ENCODE measurements at regions of chr18 and their contacts with region 1.

Region 1: GRCh38 chr18:76492669-76493212 is 2.3 kb downstream of the ZNF516 start:
- DNase-seq: peak; percentile 98 to 99
- ATAC-seq: peak; percentile 64 to 67
- H3K4me3 ChIP-seq: peak overlapping the region; percentile 82 to 94 (median 86)
- H3K27ac ChIP-seq: peak overlapping the region; percentile 82 to 99 (median 96)
- H3K4me1 ChIP-seq: peaks cover 28 to 29% of the 10 kb centered on the region in 2 donors
- H3K27me3 ChIP-seq: no peaks in the 10 kb centered on the region
- CTCF ChIP-seq: no peak
- POLR2A ChIP-seq: peak; percentile 56 to 74

Region 2: DNA sequence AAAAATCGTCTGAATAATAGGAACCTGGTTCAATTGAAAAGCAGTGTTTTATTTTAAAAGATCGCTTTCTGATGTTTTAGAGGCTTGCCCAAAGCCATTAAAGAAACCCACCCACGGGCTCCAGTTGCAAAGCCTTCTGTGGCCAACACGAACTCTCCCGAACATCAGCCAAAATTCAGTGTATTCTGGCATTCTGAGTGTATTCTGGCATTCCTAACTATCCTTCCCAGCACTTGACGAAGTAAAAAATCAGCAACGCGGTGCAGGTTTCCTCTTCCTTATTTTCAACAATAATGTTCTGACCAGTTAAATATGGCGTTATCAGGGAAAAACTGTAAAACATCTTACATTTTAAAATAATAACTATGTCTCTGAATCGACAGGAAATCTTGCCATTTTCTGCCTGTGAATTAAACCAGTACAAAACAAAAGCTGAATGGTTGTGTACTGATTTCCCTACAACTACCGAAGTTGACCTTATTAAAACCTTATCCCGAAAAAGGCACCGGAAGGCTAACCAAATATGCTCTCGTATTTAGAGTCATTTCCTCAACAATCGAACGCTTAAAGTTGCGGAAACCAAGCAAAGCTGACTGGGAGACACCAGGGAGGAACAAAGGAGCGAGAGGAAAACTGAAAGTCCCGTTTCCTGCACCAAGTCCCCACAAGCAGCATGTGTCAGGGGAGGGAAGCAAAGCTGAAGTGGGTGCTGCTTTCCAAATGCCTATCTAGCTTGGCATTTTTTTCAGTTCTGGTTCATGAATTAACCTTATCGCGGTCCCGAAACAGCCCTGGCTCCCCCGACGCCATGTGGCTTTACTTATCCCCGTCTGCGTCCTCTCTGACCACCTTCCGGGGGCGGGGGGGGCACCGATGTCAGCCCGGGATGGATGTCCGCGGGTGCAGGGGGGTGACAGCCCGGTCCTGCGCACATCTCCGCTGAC is 42.0 kb before region 1 on chr18:
- in situ Hi-C with region 1: no loop called
- intact Hi-C with region 1: loop called (anchors 1 kb)
- DNase-seq: peak; percentile 55 to 77
- ATAC-seq: peak; percentile 51 to 64
- H3K4me3 ChIP-seq: peak overlapping the region; percentile 70 to 85 (median 76)
- H3K27ac ChIP-seq: peak overlapping the region; percentile 85 to 92 (median 92)
- H3K4me1 ChIP-seq: peaks cover 66 to 72% of the 10 kb centered on the region in 2 donors
- H3K27me3 ChIP-seq: no peaks in the 10 kb centered on the region
- CTCF ChIP-seq: no peak
- POLR2A ChIP-seq: peak; percentile 26 to 51

Region 3: GRCh38 chr18:76565238-76566180 is 72.8 kb after region 1 on chr18:
- in situ Hi-C with region 1: no loop called
- intact Hi-C with region 1: loop called (anchors 2 kb)
- DNase-seq: peak; percentile 69 to 70
- ATAC-seq: peak; percentile 95 to 96
- H3K4me3 ChIP-seq: peak overlapping the region; percentile 33 to 51 (median 45)
- H3K27ac ChIP-seq: peak overlapping the region; percentile 70 to 79 (median 73)
- H3K4me1 ChIP-seq: peaks cover 11 to 18% of the 10 kb centered on the region in 2 donors
- H3K27me3 ChIP-seq: no peaks in the 10 kb centered on the region
- CTCF ChIP-seq: no peak
- POLR2A ChIP-seq: peak in 1 of 2 donors; percentile 7

Region 4: DNA sequence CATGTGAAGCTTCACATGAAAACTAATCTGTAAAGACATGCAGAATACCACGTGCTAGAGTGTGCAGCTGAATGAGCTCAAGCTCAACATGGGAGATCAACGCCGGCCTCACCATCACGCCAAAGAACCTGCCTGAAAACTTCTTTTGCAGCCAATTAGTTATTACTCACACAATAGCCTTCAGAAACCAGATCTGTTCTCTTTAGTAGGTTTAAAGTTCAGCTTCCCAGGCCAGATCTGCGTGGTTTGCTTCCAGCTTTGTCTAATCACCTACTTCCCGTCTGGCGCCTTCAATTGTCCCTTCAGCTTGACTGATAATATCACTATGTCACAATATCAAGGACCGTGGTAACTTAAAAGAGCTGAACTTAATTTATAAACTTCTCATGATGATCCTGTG is 261.6 kb after region 1 on chr18:
- in situ Hi-C with region 1: no loop called
- intact Hi-C with region 1: no loop called
- DNase-seq: no peak
- ATAC-seq: no peak
- H3K4me3 ChIP-seq: no peak overlapping the region
- H3K27ac ChIP-seq: no peak overlapping the region
- H3K4me1 ChIP-seq: no peaks in the 10 kb centered on the region
- H3K27me3 ChIP-seq: peaks cover 0 to 7% (median 0%) of the 10 kb centered on the region in 3 donors
- CTCF ChIP-seq: no peak
- POLR2A ChIP-seq: no peak

Region 5: GRCh38 chr18:76822510-76823160 is 329.9 kb after region 1 on chr18 and contains the start of gene ZNF236:
- in situ Hi-C with region 1: no loop called
- intact Hi-C with region 1: loop called (anchors 5 kb)
- DNase-seq: peak; percentile 47 to 60
- ATAC-seq: peak; percentile 73 to 78
- H3K4me3 ChIP-seq: peak within 1 kb of the TSS; percentile 77 to 97 (median 86)
- H3K27ac ChIP-seq: peak within 1 kb of the TSS; percentile 89 to 100 (median 94)
- H3K4me1 ChIP-seq: peaks cover 14 to 20% of the 10 kb centered on the region in 2 donors
- H3K27me3 ChIP-seq: no peaks in the 10 kb centered on the region
- CTCF ChIP-seq: no peak
- POLR2A ChIP-seq: peak; percentile 74 to 76
- total RNA-seq, gene ZNF236: 6.2 to 7.1 (median 6.5) TPM

Region 6: DNA sequence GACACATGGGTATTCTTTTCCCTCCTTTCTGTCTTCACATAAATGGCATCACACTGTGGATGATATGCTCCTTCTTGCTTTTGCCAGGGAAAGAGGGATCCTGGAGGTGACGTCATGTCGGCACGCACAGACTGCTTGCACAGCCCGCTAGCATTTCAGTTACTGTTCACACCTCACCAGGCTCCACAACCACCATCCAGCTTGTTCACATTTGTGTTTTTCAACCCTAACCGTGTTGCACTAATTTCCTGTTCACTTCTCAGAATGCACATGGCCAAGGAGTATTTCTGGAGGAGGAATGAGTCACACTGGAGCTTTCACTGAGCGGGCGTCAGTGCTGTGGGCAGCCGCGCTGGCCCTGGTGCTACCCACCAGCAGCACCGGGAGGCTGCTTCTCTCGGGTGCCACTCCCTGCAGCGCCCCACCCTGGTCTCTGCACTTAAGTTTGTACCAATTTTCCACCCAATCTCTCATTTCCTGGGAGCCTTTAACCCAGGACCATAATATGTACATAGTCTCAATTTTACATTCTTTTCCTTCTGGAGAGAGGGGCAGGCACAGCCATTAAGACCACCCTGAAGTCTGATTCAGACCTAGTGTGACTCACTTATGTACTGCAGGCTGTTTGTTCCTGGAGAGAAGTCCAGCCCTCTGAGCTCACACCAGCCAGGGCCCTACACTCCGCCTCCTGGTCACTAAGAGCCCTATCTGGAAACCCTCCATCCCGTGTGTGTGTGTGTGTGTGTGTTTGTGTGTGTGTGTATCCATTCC is 574.7 kb after region 1 on chr18:
- in situ Hi-C with region 1: no loop called
- intact Hi-C with region 1: loop called (anchors 10 kb)
- DNase-seq: peak; percentile 68 to 74
- ATAC-seq: peak; percentile 83
- H3K4me3 ChIP-seq: no peak overlapping the region
- H3K27ac ChIP-seq: peak overlapping the region; percentile 62 to 81 (median 76)
- H3K4me1 ChIP-seq: peaks cover 40 to 45% of the 10 kb centered on the region in 2 donors
- H3K27me3 ChIP-seq: no peaks in the 10 kb centered on the region
- CTCF ChIP-seq: peak in 2 of 5 experiments; percentile 17 to 31
- POLR2A ChIP-seq: peak; percentile 55 to 69

Region 7: DNA sequence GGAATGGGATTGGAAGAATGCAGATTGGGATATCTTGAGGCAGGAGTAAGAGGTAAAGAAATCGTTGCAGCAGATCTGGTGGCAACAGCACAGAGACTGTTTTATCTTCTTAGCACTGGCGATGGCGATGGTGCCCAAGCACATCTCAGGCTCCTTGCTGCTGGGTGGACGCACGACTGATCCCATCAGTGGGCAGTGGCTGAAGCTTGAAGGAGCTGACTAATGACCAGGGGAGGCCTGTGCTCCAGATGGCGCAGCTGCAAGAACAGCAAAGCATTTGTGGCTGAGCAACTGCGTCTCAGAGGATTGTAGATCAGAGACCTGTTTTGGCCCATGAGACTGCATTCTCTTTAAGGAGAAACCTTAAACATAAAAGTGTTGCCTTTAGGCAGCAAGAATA is 811.5 kb after region 1 on chr18:
- in situ Hi-C with region 1: no loop called
- intact Hi-C with region 1: no loop called
- DNase-seq: no peak
- ATAC-seq: no peak
- H3K4me3 ChIP-seq: no peak overlapping the region
- H3K27ac ChIP-seq: no peak overlapping the region
- H3K4me1 ChIP-seq: no peaks in the 10 kb centered on the region
- H3K27me3 ChIP-seq: no peaks in the 10 kb centered on the region
- CTCF ChIP-seq: no peak
- POLR2A ChIP-seq: no peak

Measured in gastrocnemius medialis (tissue), 4 donors.